ENCODE measurements at regions of chr20 and their contacts with region 1.

Region 1: DNA sequence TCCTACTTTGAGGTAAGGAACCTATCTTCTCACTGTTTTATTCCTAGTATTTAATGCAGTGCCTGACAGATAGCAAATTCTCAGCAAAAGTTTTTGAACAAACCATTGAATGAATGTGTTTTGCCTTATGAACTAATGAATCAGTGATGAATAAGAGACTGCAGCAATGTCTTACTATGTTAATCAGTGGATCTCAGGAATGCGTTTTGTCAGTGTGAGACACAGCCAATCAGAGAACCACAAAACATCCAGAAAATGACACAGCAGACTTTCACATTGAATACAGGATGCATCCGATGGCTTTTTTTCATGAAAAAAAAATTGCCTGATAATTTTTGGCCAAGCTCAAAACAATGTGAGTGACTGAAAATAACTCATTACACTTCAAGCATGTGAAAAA is 270.5 kb downstream of the BMP2 start:
- DNase-seq: no peak
- ATAC-seq: no peak
- H3K4me3 ChIP-seq: no peak overlapping the region
- H3K27ac ChIP-seq: no peak overlapping the region
- H3K4me1 ChIP-seq: no peaks in the 10 kb centered on the region
- H3K27me3 ChIP-seq: peaks cover 0 to 2% (median 0%) of the 10 kb centered on the region in 3 donors
- CTCF ChIP-seq: no peak

Region 2: GRCh38 chr20:6976530-6976929 is 61.5 kb before region 1 on chr20:
- intact Hi-C with region 1: no loop called
- DNase-seq: no peak
- ATAC-seq: no peak
- H3K4me3 ChIP-seq: no peak overlapping the region
- H3K27ac ChIP-seq: no peak overlapping the region
- H3K4me1 ChIP-seq: no peaks in the 10 kb centered on the region
- H3K27me3 ChIP-seq: peaks cover 0 to 3% (median 0%) of the 10 kb centered on the region in 3 donors
- CTCF ChIP-seq: no peak

Region 3: GRCh38 chr20:7085449-7085848 is 47.4 kb after region 1 on chr20:
- intact Hi-C with region 1: loop called in 1 of 2 experiments (anchors 5 kb)
- DNase-seq: no peak
- ATAC-seq: no peak
- H3K4me3 ChIP-seq: no peak overlapping the region
- H3K27ac ChIP-seq: no peak overlapping the region
- H3K4me1 ChIP-seq: no peaks in the 10 kb centered on the region
- H3K27me3 ChIP-seq: no peaks in the 10 kb centered on the region
- CTCF ChIP-seq: no peak

Region 4: GRCh38 chr20:7379621-7380220 is 341.7 kb after region 1 on chr20:
- intact Hi-C with region 1: no loop called
- DNase-seq: no peak
- ATAC-seq: no peak
- H3K4me3 ChIP-seq: no peak overlapping the region
- H3K27ac ChIP-seq: no peak overlapping the region
- H3K4me1 ChIP-seq: no peaks in the 10 kb centered on the region
- H3K27me3 ChIP-seq: no peaks in the 10 kb centered on the region
- CTCF ChIP-seq: no peak